AG04450 (cell line): ENCODE measurements at regions of chr14 and their contacts with region 1.

Region 1: GRCh38 chr14:33839193-33840076 is 111.4 kb downstream of the EGLN3 start:
- DNase-seq: no peak
- H3K4me3 ChIP-seq: no peak overlapping the region
- H3K27ac ChIP-seq: no peak overlapping the region
- H3K27me3 ChIP-seq: no peaks in the 10 kb centered on the region
- CTCF ChIP-seq: peak; percentile 75

Region 2: DNA sequence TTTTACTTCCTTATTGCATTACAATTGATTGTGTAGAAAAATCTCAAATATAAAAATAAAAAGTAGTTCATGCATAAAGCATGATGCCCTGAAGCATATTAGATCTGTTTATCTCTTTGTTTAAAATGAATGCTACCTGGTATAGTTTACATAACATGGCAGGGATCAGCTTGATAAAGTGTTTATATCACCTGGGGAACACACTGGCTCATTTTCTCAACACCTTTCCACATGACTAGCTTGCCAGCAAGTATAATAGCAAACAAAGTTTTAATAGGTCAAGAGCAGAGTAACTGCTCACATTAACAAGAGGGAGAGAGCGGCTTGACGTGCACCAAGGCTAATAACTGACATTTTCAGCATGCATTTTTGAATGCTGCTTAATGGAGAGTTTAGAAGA is 135.0 kb before region 1 on chr14:
- CTCF ChIA-PET with region 1: no interaction called
- POLR2A ChIA-PET with region 1: no interaction called
- DNase-seq: no peak
- H3K4me3 ChIP-seq: no peak overlapping the region
- H3K27ac ChIP-seq: no peak overlapping the region
- H3K27me3 ChIP-seq: peaks cover 2% of the 10 kb centered on the region
- CTCF ChIP-seq: no peak

Region 3: GRCh38 chr14:34227834-34228649 is 388.6 kb after region 1 on chr14:
- CTCF ChIA-PET with region 1: interaction called, 18 read pairs
- POLR2A ChIA-PET with region 1: no interaction called
- DNase-seq: peak; percentile 4
- H3K4me3 ChIP-seq: no peak overlapping the region
- H3K27ac ChIP-seq: no peak overlapping the region
- H3K27me3 ChIP-seq: no peaks in the 10 kb centered on the region
- CTCF ChIP-seq: peak; percentile 79